CD4-positive, alpha-beta memory T cell (primary cell): ENCODE measurements at regions of chr16 and their contacts with region 1.

Region 1: GRCh38 chr16:53435066-53435688 is 906 bp downstream of the RBL2 start:
- DNase-seq: peak; percentile 74 to 87 (median 78)
- H3K4me3 ChIP-seq: peak overlapping the region; percentile 85 to 92
- H3K4me3 Mint-ChIP-seq: peak overlapping the region; percentile 89 to 99 (median 96)
- H3K27ac ChIP-seq: peak overlapping the region; percentile 82
- H3K27ac Mint-ChIP-seq: peak overlapping the region; percentile 92 to 99 (median 98)
- H3K4me1 ChIP-seq: peaks cover 53% of the 10 kb centered on the region
- H3K4me1 Mint-ChIP-seq: peaks cover 19 to 57% (median 37%) of the 10 kb centered on the region in 4 donors
- H3K27me3 ChIP-seq: no peaks in the 10 kb centered on the region
- H3K27me3 Mint-ChIP-seq: no peaks in the 10 kb centered on the region

Region 2: DNA sequence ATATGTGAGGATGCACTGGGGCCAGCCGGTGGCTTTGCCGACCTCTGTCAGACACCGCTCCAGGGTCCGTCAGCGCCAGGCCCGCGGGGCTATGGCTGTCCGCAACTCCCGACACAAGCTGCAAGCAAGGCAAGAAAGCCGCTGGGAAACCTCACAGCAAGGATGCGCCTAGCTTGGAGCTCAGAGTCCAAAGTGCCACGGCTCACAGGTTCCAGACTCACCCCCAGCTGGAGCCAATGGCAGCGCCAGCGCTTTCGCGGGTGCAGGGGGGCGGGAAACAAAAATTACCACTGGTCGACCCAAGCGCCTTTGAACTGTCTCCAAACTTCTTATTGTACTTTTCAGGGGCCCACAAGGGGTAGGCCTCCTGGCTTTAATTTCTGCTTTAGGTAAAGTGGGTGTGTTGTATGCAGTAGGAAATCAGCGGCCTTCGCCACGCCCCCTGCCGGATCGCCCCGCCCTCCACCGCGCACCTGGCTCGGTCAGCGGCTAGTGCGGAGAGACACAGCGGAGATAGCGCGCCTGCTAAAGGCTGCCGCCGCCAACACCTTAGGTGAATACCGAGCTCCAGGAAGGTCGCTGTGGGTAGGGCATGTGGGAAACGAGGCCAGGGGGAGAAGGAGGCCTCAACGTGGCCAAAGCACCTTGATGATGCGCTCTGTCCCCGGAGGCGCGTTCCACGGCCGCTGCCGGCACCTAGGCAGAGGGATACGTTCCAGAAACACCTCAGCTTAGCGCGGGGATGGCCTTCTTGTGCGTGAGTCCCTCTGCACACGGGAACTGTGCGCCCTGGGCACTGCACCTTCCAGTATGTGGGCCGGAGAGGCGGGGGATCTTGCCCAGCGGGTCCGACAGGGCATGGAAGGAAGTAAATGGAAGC is 61.9 kb before region 1 on chr16:
- CTCF ChIA-PET with region 1: no interaction called
- POLR2A ChIA-PET with region 1: interaction called, 7 read pairs
- intact Hi-C with region 1: loop called (anchors 2 kb)
- DNase-seq: peak; percentile 74 to 84 (median 81)
- H3K4me3 ChIP-seq: peak overlapping the region; percentile 52 to 59
- H3K4me3 Mint-ChIP-seq: peak overlapping the region in 1 of 8 donors; percentile 87
- H3K27ac ChIP-seq: peak overlapping the region; percentile 27
- H3K27ac Mint-ChIP-seq: peak overlapping the region; percentile 71 to 91 (median 88)
- H3K4me1 ChIP-seq: peaks cover 10% of the 10 kb centered on the region
- H3K4me1 Mint-ChIP-seq: peaks cover 14 to 21% (median 18%) of the 10 kb centered on the region in 4 donors
- H3K27me3 ChIP-seq: no peaks in the 10 kb centered on the region
- H3K27me3 Mint-ChIP-seq: peaks cover 0 to 3% of the 10 kb centered on the region in 2 donors

Region 3: DNA sequence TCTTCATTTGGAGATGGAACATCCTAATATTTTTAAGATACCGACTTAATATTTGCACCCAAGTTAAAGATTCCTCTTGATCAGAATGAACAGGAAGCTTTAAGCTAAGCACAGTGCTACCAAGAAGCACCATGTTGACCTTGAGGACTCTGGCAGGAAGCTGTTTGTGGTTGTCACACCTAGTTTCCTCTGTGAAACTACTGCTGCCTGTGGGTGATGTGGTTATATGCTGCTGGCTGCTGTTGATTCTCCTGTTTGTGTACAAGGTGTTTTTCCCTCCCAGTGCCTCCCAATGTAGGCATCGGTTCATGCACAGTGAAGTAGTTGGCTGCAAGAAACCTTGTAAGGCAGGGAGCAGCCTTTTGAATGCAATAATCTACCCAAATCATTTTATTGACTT is 22.5 kb after region 1 on chr16:
- CTCF ChIA-PET with region 1: interaction called, 57 read pairs
- POLR2A ChIA-PET with region 1: interaction called, 364 read pairs
- intact Hi-C with region 1: loop called (anchors 1 kb)
- DNase-seq: peak; percentile 85 to 93 (median 89)
- H3K4me3 ChIP-seq: peak overlapping the region; percentile 34 to 38
- H3K4me3 Mint-ChIP-seq: peak overlapping the region; percentile 78 to 95 (median 88)
- H3K27ac ChIP-seq: peak overlapping the region; percentile 42
- H3K27ac Mint-ChIP-seq: peak overlapping the region; percentile 88 to 99 (median 94)
- H3K4me1 ChIP-seq: peaks cover 92% of the 10 kb centered on the region
- H3K4me1 Mint-ChIP-seq: peaks cover 61 to 96% (median 80%) of the 10 kb centered on the region in 4 donors
- H3K27me3 ChIP-seq: no peaks in the 10 kb centered on the region
- H3K27me3 Mint-ChIP-seq: no peaks in the 10 kb centered on the region

Region 4: GRCh38 chr16:53476867-53477266 is 41.7 kb after region 1 on chr16:
- CTCF ChIA-PET with region 1: interaction called, 4 read pairs
- POLR2A ChIA-PET with region 1: interaction called, 19 read pairs
- intact Hi-C with region 1: loop called (anchors 5 kb)
- DNase-seq: peak in 1 of 5 donors; percentile 9
- H3K4me3 ChIP-seq: no peak overlapping the region
- H3K4me3 Mint-ChIP-seq: peak overlapping the region in 6 of 8 donors; percentile 1 to 70 (median 38)
- H3K27ac ChIP-seq: no peak overlapping the region
- H3K27ac Mint-ChIP-seq: peak overlapping the region in 6 of 7 donors; percentile 1 to 83 (median 54)
- H3K4me1 ChIP-seq: peaks cover 31% of the 10 kb centered on the region
- H3K4me1 Mint-ChIP-seq: peaks cover 30 to 66% (median 48%) of the 10 kb centered on the region in 4 donors
- H3K27me3 ChIP-seq: no peaks in the 10 kb centered on the region
- H3K27me3 Mint-ChIP-seq: no peaks in the 10 kb centered on the region

Region 5: GRCh38 chr16:53495325-53495724 is 60.1 kb after region 1 on chr16:
- CTCF ChIA-PET with region 1: interaction called, 4 read pairs
- POLR2A ChIA-PET with region 1: interaction called, 211 read pairs
- intact Hi-C with region 1: no loop called
- DNase-seq: no peak
- H3K4me3 ChIP-seq: no peak overlapping the region
- H3K4me3 Mint-ChIP-seq: peak overlapping the region in 1 of 8 donors; percentile 25
- H3K27ac ChIP-seq: no peak overlapping the region
- H3K27ac Mint-ChIP-seq: peak overlapping the region in 6 of 7 donors; percentile 45 to 76 (median 74)
- H3K4me1 ChIP-seq: peaks cover 48% of the 10 kb centered on the region
- H3K4me1 Mint-ChIP-seq: peaks cover 31 to 76% (median 56%) of the 10 kb centered on the region in 4 donors
- H3K27me3 ChIP-seq: no peaks in the 10 kb centered on the region
- H3K27me3 Mint-ChIP-seq: no peaks in the 10 kb centered on the region

Region 6: DNA sequence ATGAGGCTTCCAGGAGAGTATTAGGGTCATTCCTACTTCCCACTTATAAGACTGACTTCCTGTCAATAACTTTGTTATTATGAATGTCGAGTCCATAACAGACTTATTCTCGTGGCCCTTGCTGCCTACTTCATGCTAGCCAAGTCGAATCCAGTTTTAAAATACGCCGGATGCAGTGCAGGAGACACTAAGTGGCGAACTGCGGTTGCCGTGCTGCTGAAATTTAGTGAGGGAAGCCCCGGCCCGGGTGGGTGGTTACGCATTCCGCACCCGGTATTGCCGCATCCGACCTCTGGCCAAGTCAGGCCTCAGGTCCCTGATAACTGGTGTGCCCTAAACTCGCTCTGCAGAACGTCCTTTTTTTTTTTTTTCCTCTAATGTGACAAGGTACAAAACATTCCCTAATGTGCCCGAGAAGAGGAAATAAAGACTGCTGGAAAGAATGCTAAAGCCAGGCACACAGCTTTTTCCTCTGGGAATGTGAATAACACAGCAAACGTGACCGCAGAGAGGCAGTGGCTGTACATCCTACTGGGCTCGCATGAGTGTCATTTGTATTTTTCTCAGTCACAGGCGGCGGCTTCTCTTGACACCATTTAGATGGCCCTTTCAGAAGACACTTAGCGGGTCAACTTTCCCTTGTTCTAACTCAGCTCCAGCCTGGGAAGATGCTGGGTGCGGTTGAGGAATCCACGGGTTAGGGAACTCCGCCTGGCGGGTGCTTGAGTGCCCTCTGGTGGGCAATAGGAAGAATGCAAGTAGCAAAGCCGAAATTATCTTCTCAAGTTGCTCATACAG is 74.9 kb after region 1 on chr16:
- CTCF ChIA-PET with region 1: interaction called, 15 read pairs
- POLR2A ChIA-PET with region 1: interaction called, 4 read pairs
- intact Hi-C with region 1: loop called (anchors 2 kb)
- DNase-seq: peak in 4 of 5 donors; percentile 55 to 60 (median 58)
- H3K4me3 ChIP-seq: peak overlapping the region in 1 of 2 donors; percentile 2
- H3K4me3 Mint-ChIP-seq: peak overlapping the region in 7 of 8 donors; percentile 39 to 75 (median 62)
- H3K27ac ChIP-seq: no peak overlapping the region
- H3K27ac Mint-ChIP-seq: peak overlapping the region in 6 of 7 donors; percentile 17 to 79 (median 60)
- H3K4me1 ChIP-seq: peaks cover 26% of the 10 kb centered on the region
- H3K4me1 Mint-ChIP-seq: peaks cover 26 to 53% (median 39%) of the 10 kb centered on the region in 4 donors
- H3K27me3 ChIP-seq: no peaks in the 10 kb centered on the region
- H3K27me3 Mint-ChIP-seq: no peaks in the 10 kb centered on the region

Region 7: GRCh38 chr16:53549970-53550690 is 115.0 kb after region 1 on chr16:
- CTCF ChIA-PET with region 1: no interaction called
- POLR2A ChIA-PET with region 1: no interaction called
- intact Hi-C with region 1: no loop called
- DNase-seq: peak; percentile 50 to 59 (median 57)
- H3K4me3 ChIP-seq: no peak overlapping the region
- H3K4me3 Mint-ChIP-seq: peak overlapping the region in 2 of 8 donors; percentile 4 to 25
- H3K27ac ChIP-seq: no peak overlapping the region
- H3K27ac Mint-ChIP-seq: peak overlapping the region in 1 of 7 donors; percentile 40
- H3K4me1 ChIP-seq: peaks cover 36% of the 10 kb centered on the region
- H3K4me1 Mint-ChIP-seq: peaks cover 15 to 39% (median 27%) of the 10 kb centered on the region in 4 donors
- H3K27me3 ChIP-seq: no peaks in the 10 kb centered on the region
- H3K27me3 Mint-ChIP-seq: peaks cover 0 to 2% of the 10 kb centered on the region in 2 donors